ENCODE measurements at regions of chr2 and their contacts with region 1.

Region 1: DNA sequence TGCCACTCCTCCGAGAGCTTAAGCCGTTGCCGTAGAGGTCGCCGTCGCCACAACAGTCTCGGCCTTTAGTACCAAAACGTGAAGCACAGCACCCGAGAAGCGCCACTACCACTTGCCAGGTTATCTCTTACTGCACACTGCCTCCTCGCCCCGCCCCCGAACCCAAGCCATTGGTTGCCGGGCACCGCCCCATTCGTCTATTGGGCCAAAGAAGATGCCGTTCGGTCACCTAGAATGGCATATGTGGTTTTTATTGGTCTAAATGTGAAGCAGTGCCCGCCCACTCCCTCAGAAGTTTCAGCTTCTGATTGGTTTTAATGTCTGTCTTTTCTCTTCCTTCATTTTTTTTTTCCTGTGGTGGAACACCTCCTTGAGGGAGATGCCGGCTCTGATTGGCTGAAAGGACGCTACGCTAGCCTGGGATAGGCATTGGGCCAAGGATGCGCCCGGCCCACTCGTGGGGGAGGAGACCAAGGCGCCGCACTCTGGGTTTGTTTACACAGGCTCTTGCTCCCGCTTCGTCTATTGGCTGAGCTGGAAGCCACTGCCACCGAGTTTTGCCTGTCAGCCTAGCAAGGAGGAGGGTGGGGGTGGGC is at the start of gene PAIP2B:
- DNase-seq: peak; percentile 98 to 100 (median 99)

Region 2: DNA sequence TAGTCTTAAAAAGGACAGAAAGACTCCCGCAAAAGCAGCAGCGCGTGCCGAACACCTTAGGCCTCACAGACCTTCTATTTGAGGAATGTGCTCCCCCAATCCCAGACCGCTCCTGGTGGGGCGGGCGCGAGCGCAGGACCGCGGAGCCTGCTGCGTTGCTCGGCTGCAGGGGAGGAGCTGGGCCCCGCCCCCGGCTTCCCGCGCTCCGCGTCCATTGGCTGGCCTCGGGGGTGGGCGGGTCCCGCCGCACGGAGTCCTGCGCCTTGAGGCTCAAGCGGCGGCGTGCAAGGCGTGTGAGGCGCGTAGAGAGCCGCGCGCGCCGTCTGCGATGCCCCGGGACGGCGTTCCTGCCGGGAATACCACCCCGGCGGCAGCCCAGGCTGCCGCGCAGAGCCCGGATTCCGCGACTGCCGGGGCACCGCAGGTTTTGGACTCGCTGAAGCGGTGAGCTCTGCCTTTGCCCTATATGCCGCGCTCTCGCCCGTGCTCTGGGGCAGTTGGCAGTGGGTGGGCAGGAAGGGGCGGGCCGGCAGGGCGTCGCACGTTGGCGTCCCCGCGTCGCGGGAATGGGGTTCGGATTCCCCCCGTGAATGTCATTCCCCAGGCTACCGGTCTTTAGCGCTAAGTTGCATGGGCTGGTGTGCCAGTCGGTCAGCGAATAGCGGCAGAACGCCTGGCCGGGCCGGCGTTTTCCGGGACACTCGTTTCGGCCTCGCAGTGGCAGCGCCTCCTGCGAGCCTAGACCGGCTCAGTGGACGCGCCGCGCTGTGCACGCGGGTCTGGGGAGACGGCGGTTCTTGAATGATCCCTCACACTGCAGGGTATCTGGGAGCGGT is 49.5 kb after region 1 on chr2:
- intact Hi-C with region 1: loop called (anchors 1 kb)
- DNase-seq: peak; percentile 87 to 99 (median 92)

Region 3: GRCh38 chr2:71466303-71467173 is 239.5 kb after region 1 on chr2:
- intact Hi-C with region 1: no loop called
- DNase-seq: peak in 6 of 10 donors; percentile 14 to 87 (median 52)

Region 4: GRCh38 chr2:71685078-71685848 is 458.2 kb after region 1 on chr2:
- intact Hi-C with region 1: no loop called
- DNase-seq: peak; percentile 10 to 94 (median 72)

Measured in posterior cingulate gyrus (tissue), 11 donors.